Activated naive CD4-positive, alpha-beta T cell treated with anti-CD3 and anti-CD28 coated beads for 36 hours (primary cell): ENCODE measurements at regions of chr5 and their contacts with region 1.

Region 1: DNA sequence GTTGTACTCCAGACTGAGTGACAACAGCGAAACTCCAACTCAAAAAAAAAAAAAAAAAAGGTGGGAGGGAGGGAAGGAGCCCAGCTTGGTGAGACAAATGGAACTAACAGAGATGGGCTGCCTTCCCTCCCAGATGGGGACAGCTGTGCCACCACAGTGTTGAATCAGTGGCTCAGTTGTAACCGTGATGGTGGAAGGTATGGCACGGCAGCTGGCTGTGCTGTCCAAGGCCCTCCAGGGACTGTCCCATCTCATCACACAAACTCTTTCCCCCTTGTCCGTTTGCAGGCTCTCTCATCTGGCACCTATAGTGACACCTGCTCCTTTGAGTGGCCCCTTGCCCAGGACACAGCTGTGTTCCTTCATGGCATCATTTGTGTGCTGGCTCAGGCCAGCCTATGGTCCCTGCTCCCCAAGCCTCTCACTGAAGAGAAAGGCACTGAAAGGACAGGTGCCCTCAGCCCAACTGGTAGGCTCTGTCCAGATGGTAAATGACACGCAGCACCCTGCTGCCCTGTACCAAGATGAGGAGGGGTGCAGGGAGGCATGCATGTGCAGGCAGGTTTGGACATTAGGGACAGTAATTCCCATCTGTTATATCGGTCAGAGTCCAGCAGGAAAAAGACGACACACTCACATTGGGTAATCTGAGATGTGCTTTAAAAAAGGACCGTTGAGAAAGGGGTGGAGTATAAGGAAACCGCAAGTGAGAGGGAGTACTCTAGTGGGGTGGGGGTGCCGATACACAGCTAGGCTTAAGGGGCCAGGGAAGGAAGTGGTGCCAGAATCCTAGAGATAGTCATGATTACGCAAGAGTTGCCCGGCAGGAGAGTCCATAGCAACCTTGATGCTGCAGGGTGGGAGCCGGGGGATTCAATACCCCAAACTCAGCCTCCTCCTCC is 4.3 kb downstream of the SMIM33 start:
- DNase-seq: peak; percentile 41
- H3K4me3 Mint-ChIP-seq: peak overlapping the region; percentile 35
- H3K27ac Mint-ChIP-seq: peak overlapping the region; percentile 84
- H3K4me1 Mint-ChIP-seq: peaks cover 83% of the 10 kb centered on the region
- H3K27me3 Mint-ChIP-seq: no peaks in the 10 kb centered on the region

Region 2: GRCh38 chr5:139422307-139422893 is 52.7 kb before region 1 on chr5:
- CTCF ChIA-PET with region 1: interaction called, 20 read pairs
- intact Hi-C with region 1: loop called (anchors 2 kb)
- DNase-seq: peak; percentile 77
- H3K4me3 Mint-ChIP-seq: no peak overlapping the region
- H3K27ac Mint-ChIP-seq: no peak overlapping the region
- H3K4me1 Mint-ChIP-seq: peaks cover 5% of the 10 kb centered on the region
- H3K27me3 Mint-ChIP-seq: no peaks in the 10 kb centered on the region

Region 3: DNA sequence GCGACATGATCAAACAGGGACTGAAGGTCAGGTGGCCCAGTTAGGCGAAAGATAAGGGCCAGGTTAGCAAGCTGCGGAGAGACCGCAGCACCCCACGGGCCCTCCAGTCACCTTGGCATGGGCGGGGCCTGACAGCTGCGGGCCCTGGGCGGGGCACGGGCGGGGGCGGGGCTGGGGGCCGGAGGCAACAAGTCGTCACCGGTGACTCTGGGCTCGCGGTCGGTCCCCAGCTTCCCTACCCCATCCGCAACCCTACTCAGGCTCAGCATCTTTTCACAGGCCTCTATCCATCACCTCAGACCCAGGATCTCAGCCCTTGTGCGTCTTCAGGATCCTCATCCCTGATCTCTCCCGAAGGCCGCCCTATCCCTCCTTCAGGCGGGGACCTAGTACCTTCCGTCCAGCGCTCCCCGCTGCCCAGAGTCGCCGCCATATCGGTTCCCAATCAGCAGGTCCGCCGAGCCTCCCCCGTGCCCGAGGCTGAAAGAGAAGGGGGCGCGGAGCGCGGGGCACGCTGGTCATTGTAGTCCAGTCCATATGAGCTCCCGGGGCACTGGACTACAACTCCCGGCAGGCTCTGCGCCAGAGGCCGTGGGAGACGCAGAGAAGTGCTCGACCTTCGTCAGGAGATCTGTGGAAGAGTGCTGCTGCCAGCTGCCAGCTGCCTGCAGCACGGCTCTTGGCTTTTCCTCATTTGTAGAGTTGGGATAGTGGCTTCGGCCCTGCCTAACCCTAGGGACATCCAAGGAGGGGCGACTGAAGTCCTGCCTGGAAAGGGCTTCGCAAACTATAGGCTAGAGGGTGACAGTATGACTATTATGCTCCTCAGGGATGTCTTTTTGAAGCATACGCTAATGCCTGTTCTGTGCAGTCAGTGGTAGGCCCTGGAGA is 35.9 kb before region 1 on chr5 and contains the start of gene DNAJC18:
- CTCF ChIA-PET with region 1: interaction called, 3 read pairs
- intact Hi-C with region 1: loop called (anchors 2 kb)
- DNase-seq: peak; percentile 94
- H3K4me3 Mint-ChIP-seq: peak within 1 kb of the TSS; percentile 95
- H3K27ac Mint-ChIP-seq: peak within 1 kb of the TSS; percentile 98
- H3K4me1 Mint-ChIP-seq: peaks cover 42% of the 10 kb centered on the region
- H3K27me3 Mint-ChIP-seq: no peaks in the 10 kb centered on the region
- total RNA-seq, gene DNAJC18: 18.1 to 18.8 TPM

Region 4: DNA sequence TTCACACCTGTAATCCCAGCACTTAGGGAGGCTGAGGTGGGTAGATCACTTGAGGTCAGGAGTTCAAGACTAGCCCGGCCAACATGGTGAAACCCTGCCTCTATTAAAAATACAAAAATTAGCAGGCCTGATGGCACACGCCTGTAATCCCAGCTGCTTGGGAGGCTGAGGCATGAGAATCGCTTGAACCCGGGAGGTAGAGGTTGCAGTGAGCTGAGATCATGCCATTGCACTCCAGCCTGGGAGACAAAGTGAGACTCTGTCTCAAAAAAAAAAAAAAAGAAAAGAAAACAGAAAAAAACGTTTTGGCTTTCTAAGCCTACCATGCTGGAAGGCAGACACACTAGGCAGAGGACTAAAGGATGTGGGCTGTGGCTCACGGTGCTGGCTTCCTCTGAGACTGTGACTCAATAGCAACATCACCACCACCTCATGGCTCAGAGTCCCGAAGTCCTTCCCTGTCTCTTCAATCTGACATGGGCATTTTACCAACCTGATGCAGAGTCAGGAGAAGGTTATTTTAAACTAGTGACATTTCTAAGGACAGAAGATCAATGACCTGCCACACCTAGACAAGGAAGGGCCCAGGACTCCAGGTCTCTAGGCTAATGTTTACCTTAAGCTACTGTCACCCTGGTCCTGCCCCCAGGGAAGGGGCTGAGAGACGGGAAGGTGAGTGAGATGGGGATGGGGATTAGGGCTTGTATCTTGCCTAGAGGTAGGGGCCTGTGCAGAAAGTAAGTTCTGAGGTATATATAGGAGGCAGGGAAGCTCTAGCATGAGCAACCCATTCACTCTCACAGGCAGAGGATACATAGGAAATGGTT is 16.3 kb before region 1 on chr5:
- CTCF ChIA-PET with region 1: no interaction called
- intact Hi-C with region 1: loop called (anchors 1 kb)
- DNase-seq: peak; percentile 93
- H3K4me3 Mint-ChIP-seq: peak overlapping the region; percentile 50
- H3K27ac Mint-ChIP-seq: peak overlapping the region; percentile 94
- H3K4me1 Mint-ChIP-seq: peaks cover 54% of the 10 kb centered on the region
- H3K27me3 Mint-ChIP-seq: no peaks in the 10 kb centered on the region

Region 5: DNA sequence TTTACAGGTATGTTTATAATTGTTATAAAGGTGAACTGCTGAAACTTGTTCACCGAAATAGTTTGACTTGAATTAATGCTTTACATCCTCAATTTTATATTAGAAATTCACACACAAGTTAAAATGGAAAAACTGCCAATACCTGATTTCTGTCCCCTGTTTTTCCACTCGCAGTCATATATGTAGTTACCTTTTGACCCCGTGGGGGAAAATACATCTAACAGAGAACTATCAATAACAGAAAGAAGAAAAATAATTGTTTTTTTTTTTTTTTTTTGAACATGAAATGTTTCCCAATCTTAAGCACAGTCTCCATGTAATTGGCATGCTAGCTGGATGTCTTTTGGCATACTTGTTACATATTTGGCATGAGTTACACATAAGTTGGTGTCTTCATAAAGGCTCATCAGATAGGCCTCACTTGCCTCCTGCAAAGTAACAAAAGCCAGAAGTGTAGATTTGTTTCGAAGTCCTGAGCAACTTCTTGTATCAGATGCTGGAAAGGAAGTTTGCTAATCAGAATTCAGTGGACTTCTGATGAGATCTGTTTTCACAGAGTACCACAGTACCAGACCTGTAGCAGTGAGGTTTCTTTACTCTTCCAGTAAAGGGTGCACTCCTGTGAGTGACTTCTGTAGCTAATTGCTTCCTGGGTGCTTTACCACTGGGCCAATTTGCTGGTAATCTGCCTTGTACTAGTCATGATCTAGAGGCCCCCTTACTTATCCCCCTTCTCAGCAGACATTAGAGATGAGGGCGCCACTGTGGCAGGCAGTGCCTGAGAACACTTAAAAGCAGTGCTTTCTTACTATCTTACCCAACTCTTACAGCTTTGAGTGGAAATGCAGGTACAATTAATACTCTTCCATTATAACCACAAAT is 136.8 kb after region 1 on chr5:
- CTCF ChIA-PET with region 1: no interaction called
- intact Hi-C with region 1: no loop called
- DNase-seq: peak; percentile 64
- H3K4me3 Mint-ChIP-seq: no peak overlapping the region
- H3K27ac Mint-ChIP-seq: peak overlapping the region; percentile 81
- H3K4me1 Mint-ChIP-seq: peaks cover 36% of the 10 kb centered on the region
- H3K27me3 Mint-ChIP-seq: no peaks in the 10 kb centered on the region